ENCODE measurements at regions of chr19 and their contacts with region 1.

Region 1: GRCh38 chr19:49546825-49547565 is 19.2 kb downstream of the RCN3 start:
- DNase-seq: peak; percentile 95
- H3K4me3 ChIP-seq: no peak overlapping the region
- H3K27ac ChIP-seq: peak overlapping the region; percentile 14
- H3K4me1 ChIP-seq: peaks cover 4% of the 10 kb centered on the region
- H3K27me3 ChIP-seq: no peaks in the 10 kb centered on the region
- CTCF ChIP-seq: peak; percentile 86

Region 2: DNA sequence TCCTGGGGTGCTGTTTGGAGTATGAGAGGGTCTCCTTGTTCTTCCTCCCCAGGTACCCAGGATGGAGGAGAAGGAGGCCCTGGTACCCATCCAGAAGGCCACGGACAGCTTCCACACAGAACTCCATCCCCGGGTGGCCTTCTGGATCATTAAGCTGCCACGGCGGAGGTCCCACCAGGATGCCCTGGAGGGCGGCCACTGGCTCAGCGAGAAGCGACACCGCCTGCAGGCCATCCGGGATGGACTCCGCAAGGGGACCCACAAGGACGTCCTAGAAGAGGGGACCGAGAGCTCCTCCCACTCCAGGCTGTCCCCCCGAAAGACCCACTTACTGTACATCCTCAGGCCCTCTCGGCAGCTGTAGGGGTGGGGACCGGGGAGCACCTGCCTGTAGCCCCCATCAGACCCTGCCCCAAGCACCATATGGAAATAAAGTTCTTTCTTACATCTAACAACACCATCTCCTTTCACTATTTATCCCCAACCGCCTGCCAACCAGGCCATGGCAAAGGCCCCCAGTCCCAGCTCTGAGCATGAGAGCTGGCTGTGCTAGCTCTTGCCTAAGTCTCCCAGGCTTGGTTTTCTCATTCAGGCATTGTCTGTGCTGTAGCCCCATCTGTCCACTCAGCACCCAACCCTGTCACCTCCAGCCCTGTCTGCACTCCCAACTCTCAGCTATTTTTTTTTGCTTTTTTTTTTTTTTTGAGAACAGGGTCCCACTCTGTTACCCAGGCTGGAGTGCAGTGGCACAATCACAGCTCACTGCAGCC is 172.1 kb before region 1 on chr19:
- CTCF ChIA-PET with region 1: no interaction called
- POLR2A ChIA-PET with region 1: no interaction called
- intact Hi-C with region 1: no loop called
- DNase-seq: no peak
- H3K4me3 ChIP-seq: no peak overlapping the region
- H3K27ac ChIP-seq: no peak overlapping the region
- H3K4me1 ChIP-seq: no peaks in the 10 kb centered on the region
- H3K27me3 ChIP-seq: no peaks in the 10 kb centered on the region
- CTCF ChIP-seq: no peak

Region 3: GRCh38 chr19:49497047-49497788 is 49.8 kb before region 1 on chr19:
- CTCF ChIA-PET with region 1: interaction called, 14 read pairs
- POLR2A ChIA-PET with region 1: interaction called, 4 read pairs
- intact Hi-C with region 1: no loop called
- DNase-seq: peak; percentile 87
- H3K4me3 ChIP-seq: peak overlapping the region; percentile 82
- H3K27ac ChIP-seq: peak overlapping the region; percentile 99
- H3K4me1 ChIP-seq: peaks cover 33% of the 10 kb centered on the region
- H3K27me3 ChIP-seq: no peaks in the 10 kb centered on the region
- CTCF ChIP-seq: no peak

Region 4: GRCh38 chr19:49502866-49503581 is 44.0 kb before region 1 on chr19:
- CTCF ChIA-PET with region 1: interaction called, 14 read pairs
- POLR2A ChIA-PET with region 1: interaction called, 4 read pairs
- intact Hi-C with region 1: loop called (anchors 2 kb)
- DNase-seq: peak; percentile 90
- H3K4me3 ChIP-seq: no peak overlapping the region
- H3K27ac ChIP-seq: peak overlapping the region; percentile 18
- H3K4me1 ChIP-seq: peaks cover 44% of the 10 kb centered on the region
- H3K27me3 ChIP-seq: no peaks in the 10 kb centered on the region
- CTCF ChIP-seq: peak; percentile 71